ENCODE measurements at regions of chr3 and their contacts with region 1.

Region 1: GRCh38 chr3:10738688-10739372 is 77.2 kb upstream of the SLC6A11 start:
- DNase-seq: peak; percentile 49 to 84 (median 73)
- ATAC-seq: peak; percentile 72
- H3K4me3 ChIP-seq: peak overlapping the region; percentile 10 to 44
- H3K4me3 Mint-ChIP-seq: peak overlapping the region; percentile 65
- H3K27ac ChIP-seq: no peak overlapping the region
- H3K27ac Mint-ChIP-seq: no peak overlapping the region
- H3K4me1 ChIP-seq: peaks cover 8% of the 10 kb centered on the region
- H3K4me1 Mint-ChIP-seq: peaks cover 7% of the 10 kb centered on the region
- H3K27me3 ChIP-seq: peaks cover 0 to 6% of the 10 kb centered on the region in 2 experiments
- H3K27me3 Mint-ChIP-seq: peaks cover 56% of the 10 kb centered on the region
- CTCF ChIP-seq: peak; percentile 79

Region 2: DNA sequence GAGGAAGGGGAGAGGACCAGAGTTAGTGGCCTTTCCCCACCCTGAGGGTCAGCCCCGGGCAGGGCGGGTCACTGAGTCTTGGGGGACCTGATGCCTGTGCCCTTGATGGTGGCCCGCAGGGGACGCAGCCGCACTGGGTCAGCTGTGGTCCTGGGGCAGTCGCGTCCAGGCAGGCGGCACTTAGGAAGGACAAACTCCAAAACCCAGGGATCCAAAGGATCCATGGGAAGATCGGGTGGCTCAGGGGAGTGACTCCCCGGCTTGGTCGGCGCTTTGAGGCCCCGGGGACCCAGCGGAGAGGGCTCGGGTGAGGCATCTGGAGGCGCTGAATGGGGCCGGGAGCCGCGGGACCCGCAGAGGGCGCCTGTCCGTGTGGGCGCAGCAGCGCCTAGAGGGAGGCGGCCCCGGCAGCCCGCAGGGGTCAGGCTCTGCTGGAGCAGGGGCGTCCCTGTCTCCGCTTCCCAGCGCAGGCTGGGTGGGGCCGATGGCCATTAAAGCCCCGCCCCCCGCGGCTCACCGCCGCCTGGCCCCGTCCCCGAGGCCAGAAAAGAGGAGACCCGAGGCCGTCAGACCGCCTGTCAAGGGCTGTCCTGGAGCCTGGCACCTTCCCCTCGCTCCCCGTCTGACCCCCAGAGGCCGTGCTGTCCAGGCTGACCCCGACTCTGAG is 876.3 kb before region 1 on chr3:
- CTCF ChIA-PET with region 1: no interaction called
- POLR2A ChIA-PET with region 1: no interaction called
- intact Hi-C with region 1: loop called in 1 of 2 experiments (anchors 10 kb)
- DNase-seq: peak in 6 of 9 experiments; percentile 10 to 52 (median 34)
- ATAC-seq: peak; percentile 81
- H3K4me3 ChIP-seq: peak overlapping the region in 1 of 2 experiments; percentile 6
- H3K4me3 Mint-ChIP-seq: no peak overlapping the region
- H3K27ac ChIP-seq: peak overlapping the region in 1 of 2 experiments; percentile 48
- H3K27ac Mint-ChIP-seq: no peak overlapping the region
- H3K4me1 ChIP-seq: no peaks in the 10 kb centered on the region
- H3K4me1 Mint-ChIP-seq: peaks cover 4% of the 10 kb centered on the region
- H3K27me3 ChIP-seq: peaks cover 0 to 8% of the 10 kb centered on the region in 2 experiments
- H3K27me3 Mint-ChIP-seq: peaks cover 10% of the 10 kb centered on the region
- CTCF ChIP-seq: no peak

Region 3: DNA sequence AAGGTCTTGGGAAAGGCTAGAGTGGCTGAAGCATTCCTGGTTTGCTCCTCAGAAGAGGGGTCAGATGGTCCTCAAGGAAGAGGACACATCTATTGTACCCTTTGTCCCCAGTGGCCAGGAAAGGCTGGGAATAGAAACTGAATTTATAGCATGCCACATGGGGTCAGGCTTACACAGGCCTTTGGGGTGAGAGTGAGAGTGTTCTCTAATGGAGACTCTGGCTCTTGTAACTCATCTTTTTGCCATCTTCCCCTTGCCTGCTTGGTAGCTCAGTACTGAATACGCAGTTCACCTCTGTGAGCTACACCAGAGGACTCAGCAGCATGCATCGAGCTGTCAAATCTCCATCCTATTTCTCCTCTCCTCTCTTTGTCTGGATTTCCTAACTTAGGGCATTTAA is 321.0 kb before region 1 on chr3:
- CTCF ChIA-PET with region 1: interaction called, 71 read pairs
- POLR2A ChIA-PET with region 1: interaction called, 4 read pairs
- intact Hi-C with region 1: loop called in 1 of 2 experiments (anchors 1 kb)
- DNase-seq: peak in 2 of 9 experiments; percentile 23 to 42
- ATAC-seq: no peak
- H3K4me3 ChIP-seq: no peak overlapping the region
- H3K4me3 Mint-ChIP-seq: no peak overlapping the region
- H3K27ac ChIP-seq: no peak overlapping the region
- H3K27ac Mint-ChIP-seq: no peak overlapping the region
- H3K4me1 ChIP-seq: peaks cover 7% of the 10 kb centered on the region
- H3K4me1 Mint-ChIP-seq: peaks cover 5% of the 10 kb centered on the region
- H3K27me3 ChIP-seq: no peaks in the 10 kb centered on the region
- H3K27me3 Mint-ChIP-seq: no peaks in the 10 kb centered on the region
- CTCF ChIP-seq: no peak

Region 4: GRCh38 chr3:10511809-10512494 is 226.9 kb before region 1 on chr3:
- CTCF ChIA-PET with region 1: no interaction called
- POLR2A ChIA-PET with region 1: no interaction called
- intact Hi-C with region 1: no loop called
- DNase-seq: no peak
- ATAC-seq: no peak
- H3K4me3 ChIP-seq: no peak overlapping the region
- H3K4me3 Mint-ChIP-seq: no peak overlapping the region
- H3K27ac ChIP-seq: no peak overlapping the region
- H3K27ac Mint-ChIP-seq: no peak overlapping the region
- H3K4me1 ChIP-seq: no peaks in the 10 kb centered on the region
- H3K4me1 Mint-ChIP-seq: no peaks in the 10 kb centered on the region
- H3K27me3 ChIP-seq: no peaks in the 10 kb centered on the region
- H3K27me3 Mint-ChIP-seq: no peaks in the 10 kb centered on the region
- CTCF ChIP-seq: no peak

Measured in CD8-positive, alpha-beta T cell (primary cell).